ENCODE measurements at regions of chr22 and their contacts with region 1.

Region 1: DNA sequence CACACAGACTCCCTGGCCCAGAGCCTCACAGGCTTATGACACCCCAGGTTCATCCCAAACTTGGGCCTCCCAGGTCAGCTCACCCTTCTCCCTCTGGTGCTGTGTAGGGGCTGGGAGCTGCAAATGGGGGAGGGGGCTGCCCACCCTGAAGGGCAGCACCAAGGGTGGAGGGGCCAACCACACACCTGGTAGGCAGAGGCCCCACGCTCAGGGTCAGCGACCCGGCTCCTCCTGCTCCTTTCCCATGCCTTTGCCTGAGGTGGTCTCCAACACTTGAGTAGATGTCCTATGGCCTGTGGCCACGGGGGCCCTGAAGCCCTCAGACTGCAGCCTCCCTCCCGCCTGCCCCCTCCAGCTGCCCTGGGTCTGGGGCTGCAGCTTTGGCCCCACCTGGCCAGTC is 3.4 kb downstream of the DGCR6 start:
- DNase-seq: no peak
- H3K4me3 ChIP-seq: no peak overlapping the region
- H3K27ac ChIP-seq: no peak overlapping the region
- H3K4me1 ChIP-seq: no peaks in the 10 kb centered on the region
- H3K27me3 ChIP-seq: no peaks in the 10 kb centered on the region
- CTCF ChIP-seq: no peak
- EP300 ChIP-seq: no peak
- RAD21 ChIP-seq: no peak

Region 2: DNA sequence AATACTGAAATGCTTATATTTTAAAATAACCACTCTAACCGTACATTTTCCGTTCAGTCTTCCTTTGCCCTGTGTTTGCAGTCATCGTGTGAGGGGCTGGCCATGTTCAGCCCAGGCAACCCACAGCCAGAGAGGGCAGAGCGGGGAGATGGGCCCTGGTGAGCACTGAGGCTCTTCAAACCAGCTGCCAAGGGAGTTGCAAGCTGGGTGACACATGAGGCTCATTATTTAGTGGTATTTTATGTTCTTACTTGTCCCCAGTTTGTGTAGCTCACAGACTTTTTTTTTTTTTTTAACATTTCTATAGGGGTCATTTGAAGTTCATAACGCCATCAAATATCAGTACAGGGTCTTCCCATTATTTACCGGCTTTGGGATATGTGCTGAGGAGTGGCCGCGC is 21.4 kb before region 1 on chr22:
- CTCF ChIA-PET with region 1: no interaction called
- POLR2A ChIA-PET with region 1: no interaction called
- DNase-seq: no peak
- H3K4me3 ChIP-seq: no peak overlapping the region
- H3K27ac ChIP-seq: no peak overlapping the region
- H3K4me1 ChIP-seq: no peaks in the 10 kb centered on the region
- H3K27me3 ChIP-seq: no peaks in the 10 kb centered on the region
- CTCF ChIP-seq: no peak
- EP300 ChIP-seq: no peak
- RAD21 ChIP-seq: no peak

Region 3: DNA sequence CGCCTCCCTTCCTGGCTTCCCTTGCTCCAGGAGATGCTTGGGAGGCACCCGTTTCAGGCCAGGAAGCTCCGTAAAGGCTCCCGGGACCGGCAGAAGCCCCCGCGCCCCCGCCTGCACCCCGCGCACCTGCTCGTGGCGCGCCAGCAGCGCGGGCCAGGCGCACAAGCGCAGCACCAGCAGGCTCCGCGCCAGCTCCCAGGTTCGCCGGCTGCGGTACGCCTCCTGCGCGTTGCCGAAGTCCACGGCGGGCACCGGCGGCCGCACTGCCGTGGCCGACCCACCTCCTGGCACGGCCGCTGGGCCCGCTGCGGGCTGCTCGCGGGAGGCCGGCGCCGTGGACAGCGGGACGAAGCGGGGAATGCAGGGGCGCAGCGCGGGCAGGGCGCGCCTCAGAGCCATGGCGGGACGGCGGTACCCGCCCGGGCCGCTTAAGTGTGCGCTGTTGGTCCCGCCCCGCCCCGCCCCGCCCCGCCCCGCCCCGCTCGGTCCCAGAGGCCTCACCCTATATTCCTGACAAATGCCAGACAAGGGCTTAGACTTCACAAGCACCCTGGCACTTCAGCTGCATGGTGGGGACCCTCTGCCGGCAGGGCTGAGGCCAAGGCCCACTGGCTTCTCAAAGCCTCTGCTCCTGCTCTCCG is 26.5 kb after region 1 on chr22 and contains the start of gene PRODH:
- CTCF ChIA-PET with region 1: interaction called, 16 read pairs
- POLR2A ChIA-PET with region 1: no interaction called
- DNase-seq: no peak
- H3K4me3 ChIP-seq: no peak within 1 kb of the TSS
- H3K27ac ChIP-seq: no peak within 1 kb of the TSS
- H3K4me1 ChIP-seq: no peaks in the 10 kb centered on the region
- H3K27me3 ChIP-seq: no peaks in the 10 kb centered on the region
- CTCF ChIP-seq: no peak
- EP300 ChIP-seq: no peak
- RAD21 ChIP-seq: no peak
- polyA plus RNA-seq, gene PRODH: 0.03 and 0.23 TPM in 2 replicates

Region 4: GRCh38 chr22:19011075-19011474 is 101.5 kb after region 1 on chr22:
- CTCF ChIA-PET with region 1: no interaction called
- POLR2A ChIA-PET with region 1: no interaction called
- DNase-seq: no peak
- H3K4me3 ChIP-seq: no peak overlapping the region
- H3K27ac ChIP-seq: no peak overlapping the region
- H3K4me1 ChIP-seq: no peaks in the 10 kb centered on the region; a peak in 1 of 4 replicates
- H3K27me3 ChIP-seq: no peaks in the 10 kb centered on the region
- CTCF ChIP-seq: no peak
- EP300 ChIP-seq: no peak
- RAD21 ChIP-seq: no peak